ENCODE measurements at regions of chr1 and their contacts with region 1.

Region 1: GRCh38 chr1:150561974-150562445 is 12.8 kb downstream of the ADAMTSL4 start:
- DNase-seq: peak; percentile 97
- ATAC-seq: peak; percentile 91
- H3K4me3 ChIP-seq: peak overlapping the region in 1 of 2 donors; percentile 15
- H3K27ac ChIP-seq: peak overlapping the region; percentile 93 to 95
- H3K4me1 ChIP-seq: peaks cover 0 to 12% of the 10 kb centered on the region in 2 donors
- H3K27me3 ChIP-seq: no peaks in the 10 kb centered on the region

Region 2: GRCh38 chr1:150464422-150464826 is 97.6 kb before region 1 on chr1:
- intact Hi-C with region 1: loop called in 1 of 2 experiments (anchors 5 kb)
- DNase-seq: peak in 1 of 2 donors; percentile 62
- ATAC-seq: peak; percentile 71
- H3K4me3 ChIP-seq: no peak overlapping the region
- H3K27ac ChIP-seq: no peak overlapping the region
- H3K4me1 ChIP-seq: no peaks in the 10 kb centered on the region
- H3K27me3 ChIP-seq: no peaks in the 10 kb centered on the region

Region 3: GRCh38 chr1:150537732-150538684 is 24.0 kb before region 1 on chr1:
- intact Hi-C with region 1: no loop called
- DNase-seq: peak; percentile 77 to 90
- ATAC-seq: peak; percentile 68
- H3K4me3 ChIP-seq: no peak overlapping the region
- H3K27ac ChIP-seq: peak overlapping the region; percentile 88 to 94
- H3K4me1 ChIP-seq: peaks cover 0 to 4% of the 10 kb centered on the region in 2 donors
- H3K27me3 ChIP-seq: no peaks in the 10 kb centered on the region

Region 4: DNA sequence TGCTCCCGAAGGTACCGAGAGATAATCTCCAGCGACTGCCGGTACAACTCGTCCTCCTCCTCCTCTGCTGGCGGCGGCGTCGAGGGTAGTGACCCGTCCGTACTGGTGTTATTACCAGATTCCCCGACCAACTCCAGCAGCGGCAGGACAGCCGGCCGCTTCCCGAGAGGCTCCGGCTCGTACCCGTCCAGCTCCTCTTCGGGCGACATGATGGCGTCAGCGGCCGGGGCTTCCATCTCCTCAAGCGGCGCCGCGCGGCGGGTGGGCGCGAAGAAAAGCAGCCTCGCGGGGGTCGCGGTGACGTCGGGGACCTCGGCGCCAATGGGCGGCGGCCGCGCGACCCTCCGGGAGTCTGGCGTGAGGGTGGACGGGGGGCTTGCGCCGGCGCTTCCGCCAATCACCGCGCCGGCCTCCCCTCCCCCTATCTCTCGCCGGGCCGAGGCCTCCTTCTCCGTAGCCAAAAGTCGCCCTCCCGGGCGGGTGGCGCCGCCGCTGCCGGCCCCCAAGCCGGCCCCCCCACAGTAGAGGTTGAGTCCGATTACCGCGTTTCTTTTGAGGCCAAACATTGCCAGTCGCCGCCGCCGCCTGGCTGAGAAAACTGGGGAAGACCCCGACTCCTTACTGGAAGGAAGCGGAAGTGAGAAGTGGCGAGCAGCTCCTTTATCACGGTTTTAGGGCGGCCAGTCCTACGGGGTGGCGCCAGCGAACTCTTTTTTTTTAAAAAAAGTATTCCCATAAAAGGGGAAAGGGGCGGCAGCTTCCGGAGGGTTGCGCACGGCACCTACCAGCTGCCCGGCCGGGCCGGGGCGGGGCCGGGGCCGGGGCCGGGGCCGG is 17.2 kb after region 1 on chr1 and contains the start of gene MCL1:
- intact Hi-C with region 1: loop called in 1 of 2 experiments (anchors 1 kb)
- DNase-seq: peak; percentile 95 to 96
- ATAC-seq: peak; percentile 93
- H3K4me3 ChIP-seq: peak within 1 kb of the TSS; percentile 94 to 95
- H3K27ac ChIP-seq: peak within 1 kb of the TSS; percentile 90 to 99
- H3K4me1 ChIP-seq: no peaks in the 10 kb centered on the region
- H3K27me3 ChIP-seq: no peaks in the 10 kb centered on the region
- total RNA-seq, gene MCL1: 247 to 533 TPM

Region 5: GRCh38 chr1:150621497-150622302 is 59.7 kb after region 1 on chr1:
- intact Hi-C with region 1: loop called (anchors 2 kb)
- DNase-seq: peak in 1 of 2 donors; percentile 72
- ATAC-seq: peak; percentile 68
- H3K4me3 ChIP-seq: no peak overlapping the region
- H3K27ac ChIP-seq: peak overlapping the region in 1 of 2 donors; percentile 33
- H3K4me1 ChIP-seq: peaks cover 0 to 13% of the 10 kb centered on the region in 2 donors
- H3K27me3 ChIP-seq: no peaks in the 10 kb centered on the region

Region 6: DNA sequence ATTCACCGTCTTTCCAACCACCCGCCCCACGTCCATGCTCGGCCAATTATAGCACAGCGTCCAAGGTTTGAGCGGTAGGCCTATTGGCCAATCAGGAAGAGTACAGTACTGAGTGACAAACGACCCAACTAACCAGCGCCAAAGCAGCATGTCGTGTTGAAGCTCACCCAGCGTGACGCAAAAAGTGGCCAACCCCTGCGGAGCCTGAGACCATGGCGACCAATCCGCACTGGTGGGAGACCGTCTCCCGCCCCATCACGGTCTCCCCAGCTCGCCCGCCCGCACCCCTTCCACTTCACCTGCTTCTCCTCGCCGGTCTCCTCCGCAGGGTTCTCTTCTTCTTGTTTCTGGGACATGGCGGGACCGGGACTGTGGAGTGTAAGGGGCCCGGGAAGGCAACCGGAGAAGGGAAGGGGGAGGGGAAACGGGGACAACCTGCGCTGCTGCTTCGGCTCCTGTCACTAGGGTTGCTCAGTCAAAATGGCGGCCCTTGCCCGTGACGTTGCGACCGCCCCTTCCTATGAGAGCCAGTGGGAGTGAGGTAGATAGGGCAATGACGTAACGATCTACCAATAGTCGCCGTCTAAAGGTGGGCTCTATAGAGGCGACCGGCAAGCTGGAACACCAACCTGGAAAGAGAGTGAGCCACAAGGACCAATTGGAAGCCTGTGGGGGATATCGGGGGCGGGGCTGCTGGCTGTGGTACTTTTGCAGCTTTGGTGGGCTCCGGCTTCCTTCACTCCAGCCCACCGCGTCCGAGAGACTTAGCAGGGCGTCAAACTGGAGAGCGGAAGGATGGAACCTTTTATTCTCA is 67.3 kb after region 1 on chr1 and contains the start of gene ENSA:
- intact Hi-C with region 1: loop called in 1 of 2 experiments (anchors 2 kb)
- DNase-seq: peak; percentile 98 to 99
- ATAC-seq: peak; percentile 99
- H3K4me3 ChIP-seq: peak within 1 kb of the TSS; percentile 35 to 62
- H3K27ac ChIP-seq: peak within 1 kb of the TSS; percentile 83 to 84
- H3K4me1 ChIP-seq: no peaks in the 10 kb centered on the region
- H3K27me3 ChIP-seq: no peaks in the 10 kb centered on the region
- total RNA-seq, gene ENSA: 129 to 178 TPM